Activated CD8-positive, alpha-beta memory T cell treated with anti-CD3 and anti-CD28 coated beads, Interleukin-2, amount 10 ng/mL, durations not matched to agents 7 days and 5 days (primary cell): ENCODE measurements at regions of chr3 and their contacts with region 1.

Region 1: GRCh38 chr3:48446425-48447193 is at the start of gene ATRIP:
- DNase-seq: peak; percentile 92
- ATAC-seq: peak; percentile 98
- H3K4me3 Mint-ChIP-seq: peak within 1 kb of the TSS; percentile 84
- H3K27ac Mint-ChIP-seq: peak within 1 kb of the TSS; percentile 92
- H3K4me1 Mint-ChIP-seq: peaks cover 51% of the 10 kb centered on the region
- H3K27me3 Mint-ChIP-seq: no peaks in the 10 kb centered on the region
- total RNA-seq, gene ATRIP: 20.9 to 21.2 TPM

Region 2: GRCh38 chr3:48394391-48394790 is 52.2 kb before region 1 on chr3:
- CTCF ChIA-PET with region 1: no interaction called
- DNase-seq: no peak
- ATAC-seq: peak; percentile 39
- H3K4me3 Mint-ChIP-seq: no peak overlapping the region
- H3K27ac Mint-ChIP-seq: no peak overlapping the region
- H3K4me1 Mint-ChIP-seq: no peaks in the 10 kb centered on the region
- H3K27me3 Mint-ChIP-seq: peaks cover 19% of the 10 kb centered on the region

Region 3: GRCh38 chr3:48465531-48466378 is 19.1 kb after region 1 on chr3:
- CTCF ChIA-PET with region 1: interaction called, 17 read pairs
- DNase-seq: peak; percentile 91
- ATAC-seq: peak; percentile 93
- H3K4me3 Mint-ChIP-seq: peak overlapping the region; percentile 88
- H3K27ac Mint-ChIP-seq: peak overlapping the region; percentile 99
- H3K4me1 Mint-ChIP-seq: peaks cover 52% of the 10 kb centered on the region
- H3K27me3 Mint-ChIP-seq: no peaks in the 10 kb centered on the region

Region 4: DNA sequence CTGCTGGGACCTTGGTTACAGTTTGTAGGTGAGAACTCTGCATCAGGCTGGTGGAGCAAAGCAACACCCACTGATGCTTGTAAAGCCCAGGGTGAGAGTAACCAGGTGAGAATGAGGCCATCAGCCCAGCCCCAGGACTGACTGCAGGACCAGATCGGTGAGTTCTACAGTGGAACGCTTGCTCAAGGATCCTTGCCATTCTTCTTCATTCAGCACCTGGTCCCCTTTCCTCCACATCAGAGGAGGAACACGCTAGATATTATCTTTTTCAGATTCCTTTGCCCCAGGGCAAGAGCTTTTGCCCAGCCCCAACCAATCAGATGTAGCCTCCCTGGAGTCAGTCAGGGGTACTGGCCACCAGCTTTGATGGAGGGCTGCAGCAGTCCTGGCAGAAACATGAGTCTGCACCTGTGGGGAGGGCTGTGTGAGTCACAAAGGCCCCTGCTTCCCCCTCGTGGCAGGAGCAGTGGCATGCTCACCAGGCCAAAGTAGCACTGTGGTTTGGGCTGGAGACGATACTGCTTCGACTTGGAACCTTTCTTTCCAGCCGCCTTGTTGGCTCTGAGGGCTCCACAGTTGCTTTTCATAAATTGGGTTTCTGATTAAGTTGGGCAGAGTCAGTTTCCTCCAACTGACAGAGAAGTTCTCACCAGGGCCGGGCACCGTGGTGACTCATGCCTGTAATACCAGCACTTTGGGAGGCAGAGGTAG is 60.9 kb after region 1 on chr3:
- CTCF ChIA-PET with region 1: interaction called, 24 read pairs
- DNase-seq: peak; percentile 89
- ATAC-seq: peak; percentile 83
- H3K4me3 Mint-ChIP-seq: peak overlapping the region; percentile 16
- H3K27ac Mint-ChIP-seq: peak overlapping the region; percentile 77
- H3K4me1 Mint-ChIP-seq: peaks cover 40% of the 10 kb centered on the region
- H3K27me3 Mint-ChIP-seq: peaks cover 6% of the 10 kb centered on the region